T-cell (primary cell): ENCODE measurements at regions of chr9 and their contacts with region 1.

Region 1: DNA sequence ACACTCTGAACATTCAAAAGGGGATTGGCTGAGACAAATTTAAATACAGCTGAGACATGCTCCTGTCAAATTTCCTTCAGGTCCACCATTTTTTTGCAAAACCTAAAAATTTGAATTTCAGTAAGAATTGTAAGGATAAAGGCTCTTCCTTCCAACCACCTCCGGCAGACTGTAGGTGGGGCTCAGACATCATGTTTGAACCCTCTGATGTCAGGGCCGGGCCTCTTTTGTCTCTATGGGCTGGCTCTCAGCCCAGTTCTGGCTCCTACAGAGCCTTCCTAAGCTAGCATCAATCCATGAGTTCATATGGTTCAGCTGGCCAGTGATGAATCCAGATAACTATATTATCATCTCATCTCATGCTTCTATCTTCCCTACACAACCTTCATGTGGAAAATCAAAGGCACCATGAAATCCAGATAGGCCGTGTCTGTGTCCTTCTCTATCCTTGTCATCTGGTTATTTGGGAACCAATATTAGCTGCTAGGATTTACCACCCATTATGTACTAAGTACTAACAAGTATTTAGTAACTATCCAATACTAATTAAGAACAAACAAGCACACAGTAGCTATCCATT is 44.2 kb downstream of the NIPSNAP3B start:
- DNase-seq: peak in 2 of 35 experiments; percentile 1 to 12
- ATAC-seq: no peak
- H3K4me3 ChIP-seq: no peak overlapping the region
- H3K4me3 Mint-ChIP-seq: no peak overlapping the region
- H3K27ac ChIP-seq: no peak overlapping the region
- H3K27ac Mint-ChIP-seq: no peak overlapping the region
- H3K4me1 ChIP-seq: no peaks in the 10 kb centered on the region
- H3K4me1 Mint-ChIP-seq: no peaks in the 10 kb centered on the region
- H3K27me3 ChIP-seq: no peaks in the 10 kb centered on the region
- H3K27me3 Mint-ChIP-seq: no peaks in the 10 kb centered on the region

Region 2: GRCh38 chr9:104826079-104826775 is 18.1 kb after region 1 on chr9:
- CTCF ChIA-PET with region 1: no interaction called
- POLR2A ChIA-PET with region 1: no interaction called
- DNase-seq: no peak
- ATAC-seq: no peak
- H3K4me3 ChIP-seq: no peak overlapping the region
- H3K4me3 Mint-ChIP-seq: no peak overlapping the region
- H3K27ac ChIP-seq: no peak overlapping the region
- H3K27ac Mint-ChIP-seq: no peak overlapping the region
- H3K4me1 ChIP-seq: no peaks in the 10 kb centered on the region
- H3K4me1 Mint-ChIP-seq: no peaks in the 10 kb centered on the region
- H3K27me3 ChIP-seq: no peaks in the 10 kb centered on the region
- H3K27me3 Mint-ChIP-seq: no peaks in the 10 kb centered on the region

Region 3: GRCh38 chr9:105414947-105415661 is 607.0 kb after region 1 on chr9:
- CTCF ChIA-PET with region 1: interaction called in 1 of 2 experiments, 12 read pairs
- POLR2A ChIA-PET with region 1: no interaction called
- DNase-seq: peak; percentile 5 to 85 (median 43)
- ATAC-seq: peak; percentile 73 to 84 (median 76)
- H3K4me3 ChIP-seq: no peak overlapping the region
- H3K4me3 Mint-ChIP-seq: no peak overlapping the region
- H3K27ac ChIP-seq: no peak overlapping the region
- H3K27ac Mint-ChIP-seq: no peak overlapping the region
- H3K4me1 ChIP-seq: peaks cover 0 to 3% of the 10 kb centered on the region in 2 experiments
- H3K4me1 Mint-ChIP-seq: peaks cover 2 to 4% (median 2%) of the 10 kb centered on the region in 3 donors
- H3K27me3 ChIP-seq: peaks cover 0 to 5% of the 10 kb centered on the region in 2 experiments
- H3K27me3 Mint-ChIP-seq: peaks cover 28 to 43% of the 10 kb centered on the region in 2 donors